ENCODE measurements at regions of chr6 and their contacts with region 1.

Region 1: GRCh38 chr6:27893059-27893835 is 18.9 kb downstream of the OR2B2 start:
- DNase-seq: peak; percentile 71 to 86 (median 85)
- ATAC-seq: peak; percentile 70 to 80
- H3K4me3 ChIP-seq: peak overlapping the region; percentile 97
- H3K27ac ChIP-seq: peak overlapping the region; percentile 50
- H3K4me1 ChIP-seq: peaks cover 4% of the 10 kb centered on the region
- H3K27me3 ChIP-seq: no peaks in the 10 kb centered on the region

Region 2: GRCh38 chr6:27177485-27178406 is 715.5 kb before region 1 on chr6:
- intact Hi-C with region 1: loop called (anchors 10 kb)
- DNase-seq: peak; percentile 77 to 89 (median 88)
- ATAC-seq: peak; percentile 91
- H3K4me3 ChIP-seq: peak overlapping the region; percentile 88
- H3K27ac ChIP-seq: peak overlapping the region; percentile 22
- H3K4me1 ChIP-seq: no peaks in the 10 kb centered on the region
- H3K27me3 ChIP-seq: no peaks in the 10 kb centered on the region

Region 3: DNA sequence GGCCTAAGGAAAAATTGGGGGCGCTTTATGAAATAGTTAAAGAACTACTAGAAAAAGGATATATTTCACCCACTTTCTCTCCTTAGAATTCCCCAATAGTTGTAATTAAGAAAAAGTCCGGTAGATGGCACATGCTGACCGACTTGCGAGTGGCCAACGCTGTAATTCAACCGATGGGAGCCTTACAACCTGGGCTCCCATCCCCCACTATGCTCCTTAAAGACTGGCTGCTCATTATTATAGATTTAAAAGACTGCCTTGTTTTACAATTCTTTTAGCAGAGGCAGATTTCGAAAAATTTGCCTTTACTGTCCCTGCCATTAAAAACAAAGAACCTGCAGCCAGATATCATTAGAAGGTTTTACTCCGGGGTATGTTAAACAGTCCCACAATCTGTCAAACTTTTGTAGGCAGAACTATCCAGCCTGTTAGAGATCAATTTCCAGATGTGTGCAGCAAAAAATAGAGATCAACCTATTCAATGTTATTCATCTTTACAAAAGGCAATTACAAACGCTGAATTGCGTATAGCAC is 704.3 kb before region 1 on chr6:
- intact Hi-C with region 1: loop called in 2 of 4 experiments (anchors 10 kb)
- DNase-seq: peak; percentile 51 to 77 (median 55)
- ATAC-seq: peak; percentile 93 to 94
- H3K4me3 ChIP-seq: peak overlapping the region; percentile 58
- H3K27ac ChIP-seq: peak overlapping the region; percentile 60
- H3K4me1 ChIP-seq: no peaks in the 10 kb centered on the region
- H3K27me3 ChIP-seq: no peaks in the 10 kb centered on the region

Region 4: DNA sequence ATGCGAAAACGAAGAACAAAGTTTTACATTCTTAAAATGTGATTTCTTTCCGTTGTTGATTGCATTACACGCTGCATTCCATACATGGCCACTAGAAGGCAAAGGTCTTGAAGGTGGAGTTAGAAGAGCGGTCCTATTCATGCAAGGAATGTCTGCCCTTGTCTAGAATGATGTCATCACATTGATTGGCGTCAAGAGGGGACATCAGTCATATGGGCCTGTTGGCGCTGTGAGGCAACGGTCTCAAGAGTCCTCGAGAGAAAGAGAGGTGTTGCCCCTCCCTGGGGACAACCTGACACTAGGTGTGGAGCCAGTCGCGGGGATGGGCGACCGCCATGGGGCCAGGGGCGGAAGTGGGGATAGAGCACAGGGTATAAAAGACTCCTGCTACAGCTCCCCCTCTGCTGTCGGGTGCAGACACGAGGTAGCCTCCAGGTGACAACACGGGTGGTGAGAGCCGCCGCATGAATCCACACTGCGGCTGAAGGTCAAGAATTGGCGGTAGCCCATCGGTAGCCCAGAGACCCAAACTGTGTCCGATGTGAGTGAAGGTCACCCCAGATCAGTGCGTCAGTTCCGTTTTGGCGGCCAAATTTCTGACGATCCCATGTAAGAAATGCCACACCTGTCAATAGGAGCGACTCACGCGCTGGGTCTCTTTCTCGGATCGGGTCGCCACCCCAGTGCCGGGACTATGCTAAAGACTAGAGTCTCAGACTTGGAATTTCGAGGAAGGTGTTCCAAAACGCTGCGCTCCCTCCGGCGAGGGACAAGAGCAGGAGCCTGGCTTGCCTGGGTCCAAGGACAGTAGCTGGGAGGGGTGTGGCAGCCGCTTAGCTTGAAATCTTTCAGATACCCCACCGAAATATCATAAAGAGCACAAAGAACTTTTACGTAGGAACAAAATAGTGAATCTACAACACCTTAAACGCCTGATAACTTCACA is 327.2 kb before region 1 on chr6:
- intact Hi-C with region 1: no loop called
- DNase-seq: no peak
- ATAC-seq: no peak
- H3K4me3 ChIP-seq: no peak overlapping the region
- H3K27ac ChIP-seq: no peak overlapping the region
- H3K4me1 ChIP-seq: no peaks in the 10 kb centered on the region
- H3K27me3 ChIP-seq: peaks cover 16% of the 10 kb centered on the region

Region 5: GRCh38 chr6:27772261-27773001 is 120.8 kb before region 1 on chr6:
- intact Hi-C with region 1: loop called in 2 of 4 experiments (anchors 5 to 10 kb)
- DNase-seq: peak; percentile 86 to 95 (median 95)
- ATAC-seq: peak; percentile 93 to 97
- H3K4me3 ChIP-seq: no peak overlapping the region
- H3K27ac ChIP-seq: no peak overlapping the region
- H3K4me1 ChIP-seq: no peaks in the 10 kb centered on the region
- H3K27me3 ChIP-seq: no peaks in the 10 kb centered on the region

Region 6: DNA sequence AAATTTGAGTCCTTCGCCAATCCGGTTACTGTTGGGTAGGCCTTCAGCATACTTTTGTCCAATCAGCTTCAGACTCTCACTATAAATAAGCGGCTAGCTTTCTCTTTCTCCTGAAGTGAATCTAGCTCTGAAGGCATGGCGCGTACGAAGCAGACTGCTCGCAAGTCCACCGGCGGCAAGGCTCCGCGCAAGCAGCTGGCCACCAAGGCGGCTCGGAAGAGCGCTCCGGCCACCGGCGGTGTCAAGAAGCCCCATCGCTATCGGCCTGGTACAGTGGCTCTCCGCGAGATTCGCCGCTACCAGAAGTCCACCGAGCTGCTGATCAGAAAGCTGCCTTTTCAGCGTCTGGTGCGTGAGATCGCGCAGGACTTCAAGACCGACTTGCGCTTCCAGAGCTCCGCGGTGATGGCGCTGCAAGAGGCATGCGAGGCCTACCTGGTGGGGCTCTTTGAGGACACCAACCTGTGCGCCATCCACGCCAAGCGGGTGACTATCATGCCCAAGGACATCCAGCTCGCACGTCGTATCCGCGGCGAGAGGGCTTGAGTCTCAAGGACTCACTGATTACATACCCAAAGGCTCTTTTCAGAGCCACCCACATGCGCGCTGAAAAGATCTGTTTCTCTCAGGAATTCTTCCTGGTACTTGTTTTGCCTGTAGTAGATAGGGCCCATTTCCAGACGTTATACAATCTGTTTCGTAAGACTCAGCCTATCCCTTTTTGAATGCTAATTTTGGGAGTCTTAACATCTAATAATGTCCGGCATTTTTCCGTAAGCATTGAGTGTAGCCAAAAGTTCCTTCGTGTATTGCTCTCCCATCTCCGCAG is 83.1 kb before region 1 on chr6:
- intact Hi-C with region 1: loop called in 1 of 4 experiments (anchors 5 kb)
- DNase-seq: peak; percentile 50 to 83 (median 80)
- ATAC-seq: peak; percentile 86 to 87
- H3K4me3 ChIP-seq: peak overlapping the region; percentile 52
- H3K27ac ChIP-seq: peak overlapping the region; percentile 74
- H3K4me1 ChIP-seq: peaks cover 3% of the 10 kb centered on the region
- H3K27me3 ChIP-seq: no peaks in the 10 kb centered on the region

Region 7: GRCh38 chr6:27838058-27838944 is 54.9 kb before region 1 on chr6:
- intact Hi-C with region 1: loop called in 1 of 4 experiments (anchors 10 kb)
- DNase-seq: peak; percentile 74 to 86 (median 84)
- ATAC-seq: peak; percentile 96
- H3K4me3 ChIP-seq: peak overlapping the region; percentile 56
- H3K27ac ChIP-seq: peak overlapping the region; percentile 99
- H3K4me1 ChIP-seq: no peaks in the 10 kb centered on the region
- H3K27me3 ChIP-seq: no peaks in the 10 kb centered on the region